Astrocyte of the cerebellum (primary cell): ENCODE measurements at regions of chr22 and their contacts with region 1.

Region 1: DNA sequence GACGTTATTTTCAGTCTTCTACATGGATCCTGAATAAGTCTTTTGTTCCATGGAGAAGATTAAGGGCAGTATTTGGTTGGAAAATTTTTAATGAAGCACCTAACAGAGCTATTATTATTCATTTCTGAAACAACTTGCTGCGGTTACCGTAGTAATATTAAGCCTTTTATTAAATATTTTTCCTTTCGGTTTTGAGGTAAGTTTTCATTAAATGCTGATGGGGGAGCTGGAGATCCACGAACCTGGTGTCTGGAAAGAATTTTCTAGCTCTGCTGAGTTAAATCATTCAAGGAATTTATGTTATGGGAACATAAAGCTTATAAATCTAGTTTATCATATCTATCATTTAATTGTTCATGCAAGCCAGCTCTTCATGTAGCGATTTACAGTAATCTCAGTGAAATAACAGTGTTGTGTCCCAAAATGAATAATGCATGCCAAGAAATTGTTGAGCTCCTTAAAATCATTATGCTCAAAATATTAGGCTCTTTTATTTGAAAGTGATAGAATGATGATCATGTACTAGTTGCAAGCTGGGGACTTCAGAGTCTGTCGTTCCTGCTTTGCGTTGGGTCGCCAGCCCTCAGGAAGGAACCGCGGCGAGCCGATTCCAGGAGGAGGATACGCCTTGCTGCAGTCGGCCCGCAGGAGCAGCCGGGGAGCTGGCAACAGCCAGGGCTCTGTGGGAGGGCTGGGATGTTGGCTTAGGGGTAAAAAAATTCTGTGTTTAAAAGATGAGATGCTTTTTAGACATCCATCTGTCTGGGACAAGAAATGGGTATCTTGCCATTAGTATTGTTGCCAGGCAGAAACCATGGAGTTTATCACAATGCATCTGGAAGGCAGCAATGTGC is 83.1 kb downstream of the TBC1D22A start:
- DNase-seq: peak; percentile 67
- H3K4me3 ChIP-seq: no peak overlapping the region
- CTCF ChIP-seq: peak; percentile 55

Region 2: DNA sequence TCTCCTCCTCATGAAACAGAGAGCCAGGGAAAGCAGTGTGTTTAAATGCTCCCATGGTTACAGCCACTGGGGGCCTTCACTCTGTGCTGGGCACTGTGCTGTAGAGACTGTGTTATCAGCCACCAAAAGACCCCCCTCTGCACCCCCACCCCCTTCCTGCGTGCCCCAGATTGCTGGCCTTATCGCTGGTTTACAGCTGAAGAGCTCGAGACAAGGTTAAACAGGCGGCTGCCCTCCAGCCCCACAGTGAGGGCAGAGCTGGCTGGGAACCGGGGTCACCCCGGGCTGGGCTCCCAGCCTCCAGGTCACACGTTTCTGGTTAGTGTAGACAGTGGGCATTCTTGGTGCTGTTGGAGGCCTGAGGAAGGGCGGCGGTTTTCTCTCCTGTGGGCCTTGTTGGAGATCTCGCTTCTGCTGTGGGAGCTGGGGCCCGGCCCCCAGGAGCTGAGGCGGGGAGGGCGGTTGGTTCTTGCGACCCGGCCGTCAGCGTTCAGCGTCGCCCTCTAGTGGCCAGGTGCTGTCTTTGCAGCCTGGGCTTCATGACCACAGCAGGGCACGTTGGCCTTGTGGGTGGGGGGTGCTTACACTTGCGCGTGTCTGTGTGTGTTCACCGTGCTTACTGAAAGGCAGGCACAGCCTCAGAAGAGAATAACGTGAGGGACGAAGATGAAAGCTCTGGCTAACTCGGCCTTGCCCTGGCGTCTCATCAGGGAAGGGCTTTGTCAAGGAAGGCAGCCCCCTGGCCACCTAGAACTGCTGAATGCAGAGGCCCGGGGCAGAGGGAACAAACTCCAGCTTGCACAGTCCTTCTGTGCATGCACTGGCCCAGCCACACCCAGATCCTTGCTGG is 42.3 kb before region 1 on chr22:
- in situ Hi-C with region 1: no loop called
- DNase-seq: no peak
- H3K4me3 ChIP-seq: no peak overlapping the region
- CTCF ChIP-seq: peak; percentile 93

Region 3: GRCh38 chr22:47837703-47838102 is 992.2 kb after region 1 on chr22:
- in situ Hi-C with region 1: loop called (anchors 25 kb)
- DNase-seq: no peak
- H3K4me3 ChIP-seq: no peak overlapping the region
- CTCF ChIP-seq: peak; percentile 31

Region 4: GRCh38 chr22:48492366-48493320 is 1647.1 kb after region 1 on chr22:
- in situ Hi-C with region 1: loop called (anchors 25 kb)
- DNase-seq: peak; percentile 76
- H3K4me3 ChIP-seq: no peak overlapping the region
- CTCF ChIP-seq: peak; percentile 90